ENCODE measurements at regions of chr19 and their contacts with region 1.

Region 1: GRCh38 chr19:34461375-34462100 is 20.0 kb upstream of the WTIP start:
- DNase-seq: no peak
- ATAC-seq: no peak
- H3K4me3 ChIP-seq: no peak overlapping the region
- H3K27ac ChIP-seq: no peak overlapping the region
- H3K4me1 ChIP-seq: no peaks in the 10 kb centered on the region
- H3K27me3 ChIP-seq: no peaks in the 10 kb centered on the region
- CTCF ChIP-seq: no peak

Region 2: GRCh38 chr19:34475026-34475974 is 13.8 kb after region 1 on chr19:
- CTCF ChIA-PET with region 1: no interaction called
- POLR2A ChIA-PET with region 1: interaction called, 11 read pairs
- in situ Hi-C with region 1: no loop called
- intact Hi-C with region 1: no loop called
- DNase-seq: no peak
- ATAC-seq: no peak; the same call in 1 of the 2 replicates
- H3K4me3 ChIP-seq: no peak overlapping the region
- H3K27ac ChIP-seq: no peak overlapping the region
- H3K4me1 ChIP-seq: no peaks in the 10 kb centered on the region
- H3K27me3 ChIP-seq: no peaks in the 10 kb centered on the region
- CTCF ChIP-seq: no peak